Ascending aorta (tissue), 2 donors: ENCODE measurements at regions of chr14 and their contacts with region 1.

Region 1: DNA sequence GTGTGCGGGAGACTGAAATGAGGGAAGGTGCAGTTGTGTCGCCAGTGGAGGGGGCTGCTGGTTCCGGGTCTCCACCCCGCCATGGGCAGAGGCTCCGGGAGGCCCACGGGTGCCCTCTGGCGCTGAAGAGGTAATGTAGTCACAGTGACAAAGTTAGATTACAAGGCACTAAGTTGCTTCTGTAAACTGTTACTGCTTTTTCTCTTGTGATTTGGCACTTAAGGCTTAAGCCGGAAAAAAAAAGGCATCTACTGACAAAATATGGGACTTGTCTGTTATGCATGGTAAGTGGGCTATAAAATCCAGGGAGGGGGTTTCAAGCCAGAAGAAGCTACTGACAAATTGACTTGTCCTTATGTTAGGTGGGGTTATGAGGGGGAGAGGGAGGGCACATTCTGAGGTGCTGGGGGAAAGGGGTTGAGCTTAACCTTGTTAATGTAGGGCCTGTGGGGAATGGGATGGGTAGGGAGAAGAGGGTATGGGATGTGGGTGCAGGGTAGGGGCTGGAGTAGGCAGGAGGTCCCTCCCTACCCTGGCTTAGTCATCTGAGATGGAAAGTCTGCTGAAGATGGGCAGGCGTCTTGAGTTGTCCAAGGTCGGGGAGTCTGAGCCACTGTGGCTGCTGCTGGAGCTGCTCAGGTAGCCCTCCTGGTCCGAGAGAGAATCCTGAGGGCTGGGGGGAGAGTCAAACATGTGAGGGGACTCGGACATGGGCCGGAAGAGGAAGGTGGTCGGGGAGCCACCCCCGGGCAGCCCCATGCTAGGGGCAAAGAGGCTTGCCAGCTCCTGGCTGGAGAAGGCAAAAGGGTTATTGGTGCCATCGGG is 3.7 kb downstream of the ZFP36L1 start:
- DNase-seq: peak in 1 of 2 donors; percentile 92
- H3K4me3 ChIP-seq: peak overlapping the region; percentile 77 to 92
- H3K27ac ChIP-seq: peak overlapping the region; percentile 100
- H3K4me1 ChIP-seq: peaks cover 0 to 27% of the 10 kb centered on the region in 2 donors
- H3K27me3 ChIP-seq: no peaks in the 10 kb centered on the region
- CTCF ChIP-seq: peak; percentile 80 to 81 (median 81)

Region 2: GRCh38 chr14:68392393-68393141 is 396.6 kb before region 1 on chr14:
- intact Hi-C with region 1: loop called (anchors 2 kb)
- DNase-seq: peak; percentile 41 to 82
- H3K4me3 ChIP-seq: no peak overlapping the region
- H3K27ac ChIP-seq: peak overlapping the region; percentile 85 to 91
- H3K4me1 ChIP-seq: peaks cover 18 to 61% of the 10 kb centered on the region in 2 donors
- H3K27me3 ChIP-seq: no peaks in the 10 kb centered on the region
- CTCF ChIP-seq: no peak

Region 3: DNA sequence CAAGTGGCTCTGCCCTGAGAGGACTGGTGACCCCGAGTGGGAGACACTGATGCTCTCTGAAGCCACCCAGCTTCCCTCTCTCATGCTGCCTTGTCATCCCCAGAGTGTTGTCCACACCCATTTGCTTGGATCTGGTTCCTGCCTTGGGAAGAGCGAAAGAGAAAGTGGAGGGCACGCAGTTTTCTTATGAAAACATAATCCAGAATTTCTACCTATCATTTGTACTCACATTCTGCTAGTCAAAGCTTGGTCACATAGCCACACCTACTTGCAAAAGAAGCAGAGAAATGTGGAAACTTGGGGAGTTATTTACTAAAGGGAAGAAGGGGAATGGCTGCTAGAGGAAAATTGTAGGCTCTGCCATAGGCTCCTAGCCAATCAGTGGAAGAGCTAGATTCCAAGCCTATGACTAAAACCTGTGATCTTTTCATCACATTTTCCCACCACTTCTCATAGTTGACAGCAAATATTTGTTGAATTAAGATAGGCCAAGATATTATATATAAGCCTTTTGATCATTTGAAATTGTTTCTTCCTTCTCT is 322.6 kb before region 1 on chr14:
- intact Hi-C with region 1: loop called (anchors 5 kb)
- DNase-seq: peak in 1 of 2 donors; percentile 66
- H3K4me3 ChIP-seq: no peak overlapping the region
- H3K27ac ChIP-seq: peak overlapping the region; percentile 6 to 33
- H3K4me1 ChIP-seq: peaks cover 3 to 20% of the 10 kb centered on the region in 2 donors
- H3K27me3 ChIP-seq: no peaks in the 10 kb centered on the region
- CTCF ChIP-seq: no peak

Region 4: GRCh38 chr14:68520637-68521556 is 268.3 kb before region 1 on chr14:
- intact Hi-C with region 1: loop called (anchors 2 kb)
- DNase-seq: no peak
- H3K4me3 ChIP-seq: no peak overlapping the region
- H3K27ac ChIP-seq: peak overlapping the region; percentile 77 to 78
- H3K4me1 ChIP-seq: peaks cover 15 to 48% of the 10 kb centered on the region in 2 donors
- H3K27me3 ChIP-seq: no peaks in the 10 kb centered on the region
- CTCF ChIP-seq: no peak

Region 5: GRCh38 chr14:68633071-68633991 is 155.9 kb before region 1 on chr14:
- intact Hi-C with region 1: loop called (anchors 5 kb)
- DNase-seq: no peak
- H3K4me3 ChIP-seq: no peak overlapping the region
- H3K27ac ChIP-seq: no peak overlapping the region
- H3K4me1 ChIP-seq: peaks cover 11 to 37% of the 10 kb centered on the region in 2 donors
- H3K27me3 ChIP-seq: no peaks in the 10 kb centered on the region
- CTCF ChIP-seq: no peak

Region 6: DNA sequence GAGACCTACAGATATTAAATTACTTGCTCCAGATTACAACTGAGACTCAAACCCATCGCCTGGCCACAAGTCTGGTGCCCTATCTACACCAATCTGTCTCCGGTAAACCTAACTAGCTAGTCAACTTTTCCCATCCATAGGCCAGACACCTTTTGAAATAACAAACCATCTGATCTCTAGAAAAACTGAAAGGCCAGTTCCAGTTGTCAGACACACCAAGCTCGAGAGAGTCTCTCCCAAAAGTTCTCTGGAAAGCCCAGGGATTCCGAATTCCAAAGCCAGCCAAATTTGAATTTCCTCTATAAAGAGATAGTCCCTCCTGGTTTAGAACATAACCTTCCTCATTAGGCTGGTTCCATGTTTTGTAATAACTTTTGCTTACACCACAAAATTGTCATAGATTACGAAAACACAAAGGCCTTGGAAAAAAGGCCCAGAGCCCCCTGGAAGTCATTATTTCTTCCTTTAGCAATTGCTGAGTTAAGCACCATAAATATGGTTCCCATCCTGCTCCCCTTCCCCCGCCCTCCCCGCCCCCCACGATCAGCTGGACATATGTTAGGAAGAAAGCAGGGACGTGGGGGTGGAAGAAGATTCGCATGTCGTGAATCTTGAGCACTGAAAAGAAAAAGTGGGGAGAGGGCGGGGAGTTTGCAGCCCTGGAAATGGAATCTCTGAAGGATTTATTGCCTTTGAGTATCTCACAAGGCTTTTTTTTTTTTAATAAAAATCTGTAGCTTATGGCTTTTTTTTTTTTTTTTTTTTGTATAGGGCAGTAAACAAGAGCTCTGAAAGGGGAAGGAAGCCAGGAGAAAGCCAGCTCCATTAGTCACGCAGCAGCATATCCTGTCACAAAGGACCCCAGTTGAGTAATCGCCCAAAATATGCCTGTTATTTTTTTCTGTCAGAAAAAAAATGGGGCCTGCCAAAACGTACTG is 106.8 kb before region 1 on chr14:
- intact Hi-C with region 1: loop called (anchors 5 kb)
- DNase-seq: peak; percentile 41 to 81
- H3K4me3 ChIP-seq: no peak overlapping the region
- H3K27ac ChIP-seq: peak overlapping the region; percentile 65 to 84
- H3K4me1 ChIP-seq: peaks cover 13 to 40% of the 10 kb centered on the region in 2 donors
- H3K27me3 ChIP-seq: no peaks in the 10 kb centered on the region
- CTCF ChIP-seq: no peak

Region 7: GRCh38 chr14:68816262-68816942 is 27.2 kb after region 1 on chr14:
- intact Hi-C with region 1: no loop called
- DNase-seq: peak; percentile 56 to 93
- H3K4me3 ChIP-seq: peak overlapping the region; percentile 56 to 67
- H3K27ac ChIP-seq: peak overlapping the region; percentile 96 to 97
- H3K4me1 ChIP-seq: peaks cover 12 to 24% of the 10 kb centered on the region in 2 donors
- H3K27me3 ChIP-seq: no peaks in the 10 kb centered on the region
- CTCF ChIP-seq: peak; percentile 95 to 100 (median 98)